Left colon (tissue), 2 donors: ENCODE measurements at regions of chr15 and their contacts with region 1.

Region 1: DNA sequence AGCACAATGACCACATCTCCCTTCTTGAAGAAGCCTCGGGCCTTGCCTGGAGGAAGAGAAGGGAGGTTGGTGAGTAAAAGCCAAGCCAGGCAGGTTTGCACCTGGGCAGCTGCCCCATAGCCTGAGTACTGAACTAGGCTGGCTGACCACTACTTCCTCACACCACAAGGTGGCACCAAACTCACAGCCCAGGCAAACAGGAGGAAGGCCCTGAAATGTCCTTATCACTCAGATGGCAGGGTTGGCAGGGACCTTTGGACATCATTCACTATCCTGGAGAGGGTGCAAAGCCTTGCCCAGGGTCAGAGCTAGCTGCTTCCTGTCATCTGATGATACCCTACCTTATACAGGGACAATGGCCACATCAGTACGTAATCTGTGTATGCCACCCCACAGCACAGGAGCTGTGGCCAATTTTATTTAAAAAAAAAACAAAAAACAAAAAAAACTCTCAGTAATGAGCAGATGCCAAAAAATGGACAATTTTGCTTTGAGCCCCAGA is 2.2 kb upstream of the GRAMD2A start:
- DNase-seq: peak; percentile 82
- ATAC-seq: peak; percentile 87

Region 2: GRCh38 chr15:72272213-72273002 is 72.6 kb after region 1 on chr15 and contains the start of gene PARP6:
- intact Hi-C with region 1: loop called in 1 of 2 experiments (anchors 10 kb)
- DNase-seq: peak; percentile 95 to 99
- ATAC-seq: peak; percentile 97
- total RNA-seq, gene PARP6: 39.1 to 40.8 TPM